ENCODE measurements at regions of chr9 and their contacts with region 1.

Region 1: GRCh38 chr9:69672596-69673310 is 582 bp upstream of the APBA1 start:
- DNase-seq: peak; percentile 73 to 82
- ATAC-seq: peak; percentile 91 to 97
- H3K4me3 ChIP-seq: peak overlapping the region; percentile 73
- H3K27ac ChIP-seq: peak overlapping the region; percentile 53 to 84; a peak in 5 of 6 replicates
- H3K4me1 ChIP-seq: no peaks in the 10 kb centered on the region
- CTCF ChIP-seq: peak; percentile 66
- EP300 ChIP-seq: no peak
- POLR2A ChIP-seq: no peak
- RAD21 ChIP-seq: peak; percentile 62 to 70

Region 2: GRCh38 chr9:69379250-69379982 is 293.3 kb before region 1 on chr9:
- CTCF ChIA-PET with region 1: no interaction called
- POLR2A ChIA-PET with region 1: no interaction called
- DNase-seq: peak in 1 of 2 experiments; percentile 16
- ATAC-seq: peak; percentile 37 to 67; a peak in 3 of 6 replicates
- H3K4me3 ChIP-seq: no peak overlapping the region
- H3K27ac ChIP-seq: no peak overlapping the region
- H3K4me1 ChIP-seq: no peaks in the 10 kb centered on the region
- CTCF ChIP-seq: no peak
- EP300 ChIP-seq: no peak
- POLR2A ChIP-seq: no peak
- RAD21 ChIP-seq: no peak

Region 3: DNA sequence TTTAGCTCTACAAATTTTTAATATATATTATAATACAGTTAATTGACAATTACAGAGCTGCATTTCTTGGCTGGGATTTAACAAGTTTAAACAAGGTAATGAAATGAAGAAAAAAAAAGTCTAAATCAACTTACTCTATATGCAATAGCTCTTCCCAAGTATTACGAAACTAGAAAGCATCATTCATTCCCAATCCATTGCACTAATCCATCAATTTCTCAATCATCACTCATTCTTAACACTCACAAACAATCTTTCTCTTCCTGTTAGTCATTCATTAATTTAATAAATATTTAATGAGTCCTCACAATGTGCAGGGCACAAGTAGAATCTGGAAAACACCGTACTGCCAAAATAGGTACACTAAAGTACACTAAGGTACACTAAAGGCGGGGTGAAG is 42.3 kb after region 1 on chr9:
- CTCF ChIA-PET with region 1: interaction called, 11 read pairs
- POLR2A ChIA-PET with region 1: no interaction called
- DNase-seq: no peak
- ATAC-seq: no peak
- H3K4me3 ChIP-seq: no peak overlapping the region
- H3K27ac ChIP-seq: no peak overlapping the region
- H3K4me1 ChIP-seq: no peaks in the 10 kb centered on the region
- CTCF ChIP-seq: no peak
- EP300 ChIP-seq: no peak
- POLR2A ChIP-seq: no peak
- RAD21 ChIP-seq: no peak

Region 4: GRCh38 chr9:69877854-69878514 is 205.2 kb after region 1 on chr9:
- CTCF ChIA-PET with region 1: interaction called, 17 read pairs
- POLR2A ChIA-PET with region 1: no interaction called
- DNase-seq: peak; percentile 28 to 50
- ATAC-seq: peak; percentile 74 to 82; a peak in 5 of 6 replicates
- H3K4me3 ChIP-seq: no peak overlapping the region
- H3K27ac ChIP-seq: peak overlapping the region in 1 of 2 experiments; percentile 22; a peak in 1 of 6 replicates
- H3K4me1 ChIP-seq: no peaks in the 10 kb centered on the region
- CTCF ChIP-seq: peak; percentile 73
- EP300 ChIP-seq: no peak
- POLR2A ChIP-seq: no peak
- RAD21 ChIP-seq: peak; percentile 84 to 85

Region 5: DNA sequence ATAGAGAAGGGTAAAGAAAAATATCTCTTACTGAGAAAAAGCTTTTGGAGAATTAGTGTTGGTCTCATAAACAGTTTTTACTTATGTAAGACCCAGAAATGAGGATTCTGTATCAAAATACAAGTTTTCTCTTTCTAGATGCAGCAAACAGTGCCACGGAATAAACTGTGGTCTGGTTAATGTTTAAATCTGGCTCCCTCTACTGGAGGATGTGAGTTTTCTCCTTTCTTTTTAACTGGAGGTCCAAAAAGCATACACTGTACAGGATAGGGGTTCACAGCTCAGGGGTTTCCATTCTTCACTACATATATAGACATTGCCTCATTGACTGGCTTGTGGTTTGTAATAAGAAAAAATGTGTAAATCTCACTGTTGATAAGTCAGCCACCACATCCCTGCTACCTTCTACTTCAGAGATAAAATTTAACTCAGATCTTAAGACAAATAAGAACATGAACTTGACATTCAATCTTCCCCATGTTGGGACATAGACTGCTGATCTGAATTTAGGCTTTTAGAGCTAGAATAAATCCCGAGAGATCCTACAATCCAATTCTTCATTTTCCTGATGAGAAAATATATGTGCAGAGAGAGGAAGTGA is 246.8 kb after region 1 on chr9:
- CTCF ChIA-PET with region 1: interaction called, 39 read pairs
- POLR2A ChIA-PET with region 1: no interaction called
- DNase-seq: peak; percentile 42 to 59
- ATAC-seq: peak; percentile 91 to 97
- H3K4me3 ChIP-seq: no peak overlapping the region
- H3K27ac ChIP-seq: no peak overlapping the region
- H3K4me1 ChIP-seq: no peaks in the 10 kb centered on the region
- CTCF ChIP-seq: peak; percentile 83
- EP300 ChIP-seq: no peak
- POLR2A ChIP-seq: no peak
- RAD21 ChIP-seq: peak; percentile 78 to 80